ENCODE measurements at regions of chr9 and their contacts with region 1.

Region 1: GRCh38 chr9:75866273-75866871 is 24.1 kb upstream of the PCSK5 start:
- DNase-seq: peak in 1 of 2 donors; percentile 56
- ATAC-seq: peak in 1 of 8 donors; percentile 70
- H3K4me3 ChIP-seq: no peak overlapping the region
- H3K27ac ChIP-seq: no peak overlapping the region
- H3K4me1 ChIP-seq: peaks cover 0 to 19% (median 0%) of the 10 kb centered on the region in 9 donors
- H3K27me3 ChIP-seq: no peaks in the 10 kb centered on the region
- CTCF ChIP-seq: peak; percentile 62 to 89 (median 81)

Region 2: GRCh38 chr9:75265525-75265972 is 600.8 kb before region 1 on chr9:
- intact Hi-C with region 1: loop called in 7 of 10 experiments (anchors 2 to 10 kb)
- DNase-seq: peak in 1 of 2 donors; percentile 22
- ATAC-seq: peak in 6 of 8 donors; percentile 55 to 79 (median 66)
- H3K4me3 ChIP-seq: no peak overlapping the region
- H3K27ac ChIP-seq: no peak overlapping the region
- H3K4me1 ChIP-seq: no peaks in the 10 kb centered on the region
- H3K27me3 ChIP-seq: no peaks in the 10 kb centered on the region
- CTCF ChIP-seq: peak; percentile 81 to 93 (median 91)

Region 3: GRCh38 chr9:75601279-75601678 is 265.1 kb before region 1 on chr9:
- intact Hi-C with region 1: loop called in 3 of 10 experiments (anchors 5 to 10 kb)
- DNase-seq: no peak
- ATAC-seq: no peak
- H3K4me3 ChIP-seq: no peak overlapping the region
- H3K27ac ChIP-seq: no peak overlapping the region
- H3K4me1 ChIP-seq: peaks cover 0 to 6% (median 0%) of the 10 kb centered on the region in 9 donors
- H3K27me3 ChIP-seq: no peaks in the 10 kb centered on the region
- CTCF ChIP-seq: peak in 4 of 9 donors; percentile 19 to 43 (median 28)

Region 4: GRCh38 chr9:75930730-75931321 is 64.5 kb after region 1 on chr9:
- intact Hi-C with region 1: no loop called
- DNase-seq: no peak
- ATAC-seq: no peak
- H3K4me3 ChIP-seq: no peak overlapping the region
- H3K27ac ChIP-seq: peak overlapping the region in 2 of 10 donors; percentile 5 to 10
- H3K4me1 ChIP-seq: peaks cover 0 to 13% (median 6%) of the 10 kb centered on the region in 9 donors
- H3K27me3 ChIP-seq: no peaks in the 10 kb centered on the region
- CTCF ChIP-seq: no peak

Region 5: GRCh38 chr9:76018235-76018634 is 151.9 kb after region 1 on chr9:
- intact Hi-C with region 1: no loop called
- DNase-seq: no peak
- ATAC-seq: no peak
- H3K4me3 ChIP-seq: no peak overlapping the region
- H3K27ac ChIP-seq: no peak overlapping the region
- H3K4me1 ChIP-seq: no peaks in the 10 kb centered on the region
- H3K27me3 ChIP-seq: no peaks in the 10 kb centered on the region
- CTCF ChIP-seq: no peak

Region 6: GRCh38 chr9:76297721-76298239 is 431.4 kb after region 1 on chr9:
- intact Hi-C with region 1: loop called in 5 of 10 experiments (anchors 10 kb)
- DNase-seq: peak; percentile 25 to 40
- ATAC-seq: peak; percentile 73 to 86 (median 81)
- H3K4me3 ChIP-seq: peak overlapping the region in 3 of 10 donors; percentile 3 to 22 (median 7)
- H3K27ac ChIP-seq: peak overlapping the region in 9 of 10 donors; percentile 4 to 63 (median 41)
- H3K4me1 ChIP-seq: peaks cover 0 to 20% (median 0%) of the 10 kb centered on the region in 9 donors
- H3K27me3 ChIP-seq: peaks cover 0 to 9% (median 0%) of the 10 kb centered on the region in 7 donors
- CTCF ChIP-seq: no peak

Measured in heart right ventricle (tissue), 16 donors.